Activated CD4-positive, alpha-beta T cell treated with anti-CD3 and anti-CD28 coated beads for 36 hours (primary cell): ENCODE measurements at regions of chr14 and their contacts with region 1.

Region 1: DNA sequence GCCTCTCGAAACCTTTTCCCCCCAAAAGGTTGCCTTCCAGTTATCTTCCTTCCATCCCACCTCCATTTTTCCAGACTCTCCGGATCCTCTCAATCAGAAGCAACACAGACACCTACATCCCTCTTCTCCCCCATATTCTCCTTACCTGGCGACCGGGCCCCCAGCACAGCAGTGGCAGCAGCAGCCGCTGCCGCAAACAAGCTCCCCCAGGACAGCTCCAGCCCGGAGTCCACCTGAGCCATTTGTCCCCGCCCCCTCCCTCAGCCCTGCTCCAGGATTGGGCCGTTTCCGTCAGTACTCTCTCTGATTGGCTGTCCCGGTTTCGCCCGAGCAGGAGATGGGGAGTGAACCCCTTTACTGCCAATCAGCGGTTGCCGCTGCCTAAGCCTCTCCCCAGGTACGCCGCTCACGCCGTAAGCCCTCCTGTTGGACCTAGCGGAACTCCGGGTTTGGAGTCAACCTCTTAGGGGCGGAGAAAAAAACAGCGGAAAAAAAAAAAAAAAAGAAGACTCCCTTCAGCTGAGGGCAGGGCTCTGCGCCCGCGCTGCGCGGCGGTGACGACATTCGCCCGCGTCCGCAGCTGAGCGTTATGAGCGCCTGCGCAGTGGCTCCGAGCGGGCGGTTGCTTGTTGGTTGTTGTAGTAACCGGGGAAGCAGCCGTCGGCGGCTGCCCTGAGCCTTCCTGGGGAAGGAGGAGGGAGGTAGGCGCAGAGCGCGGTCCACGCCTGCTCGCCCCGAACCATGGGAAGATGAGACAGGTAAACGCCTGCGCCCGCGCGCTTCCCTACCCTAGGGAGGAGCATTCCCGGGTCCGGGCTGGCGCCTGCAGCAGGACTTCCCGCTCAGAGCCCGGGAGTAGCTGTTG is at the starts of genes ERG28 and TTLL5:
- DNase-seq: peak; percentile 97
- ATAC-seq: peak; percentile 99
- H3K4me3 Mint-ChIP-seq: peak within 1 kb of the TSS; percentile 96
- H3K27ac Mint-ChIP-seq: peak within 1 kb of the TSS; percentile 99
- H3K4me1 Mint-ChIP-seq: peaks cover 17% of the 10 kb centered on the region
- H3K27me3 Mint-ChIP-seq: no peaks in the 10 kb centered on the region
- total RNA-seq, gene ERG28: 19.1 to 23.7 TPM
- total RNA-seq, gene TTLL5: 27.3 to 38.6 TPM

Region 2: DNA sequence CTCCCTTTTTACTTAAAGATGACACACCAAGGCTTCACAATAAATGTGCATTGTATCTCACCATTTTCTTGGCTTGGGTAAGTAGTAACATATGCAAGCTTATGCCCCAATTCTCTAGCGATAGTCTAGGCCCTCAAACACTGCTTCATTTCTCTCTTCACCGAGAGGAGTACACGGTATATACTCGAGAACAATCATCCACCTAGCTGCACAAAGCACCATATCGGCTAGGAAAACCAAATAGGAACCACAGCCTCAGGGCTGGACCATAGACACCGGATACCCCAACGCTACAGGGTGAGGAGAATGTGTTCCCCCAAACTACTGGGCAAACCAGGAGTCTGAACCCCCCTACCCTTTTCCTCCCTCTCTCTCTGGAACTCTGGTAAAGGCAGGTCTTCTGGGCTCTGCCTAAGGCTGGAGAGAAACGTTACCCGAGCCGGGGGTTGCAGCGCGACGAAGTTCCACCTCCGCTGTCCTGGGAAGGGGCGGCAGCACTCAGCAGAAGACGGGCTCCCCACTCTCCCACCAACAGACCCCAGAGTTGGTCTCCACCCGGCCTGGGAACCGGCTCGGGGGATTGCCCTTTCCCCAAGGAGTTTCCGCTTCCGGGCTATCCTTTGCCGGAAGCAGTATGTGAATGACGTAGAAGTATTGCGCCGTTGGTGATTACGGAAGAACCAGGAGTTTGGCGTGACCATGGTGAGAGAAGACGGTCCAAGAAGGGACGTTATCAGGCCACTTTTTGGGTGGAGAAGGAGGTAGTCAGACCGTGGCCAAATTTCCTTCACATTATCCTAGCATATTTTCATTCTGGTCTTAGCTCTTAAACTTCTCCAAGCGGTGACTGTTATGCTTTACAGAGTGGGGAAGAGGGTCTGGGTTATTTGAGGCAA is 948.1 kb before region 1 on chr14 and contains the starts of genes AREL1 and FCF1:
- CTCF ChIA-PET with region 1: no interaction called
- POLR2A ChIA-PET with region 1: no interaction called
- intact Hi-C with region 1: loop called in 1 of 2 experiments (anchors 1 kb)
- DNase-seq: peak; percentile 88
- ATAC-seq: peak; percentile 98
- H3K4me3 Mint-ChIP-seq: peak within 1 kb of the TSS; percentile 98
- H3K27ac Mint-ChIP-seq: peak within 1 kb of the TSS; percentile 98
- H3K4me1 Mint-ChIP-seq: peaks cover 50% of the 10 kb centered on the region
- H3K27me3 Mint-ChIP-seq: no peaks in the 10 kb centered on the region
- total RNA-seq, gene AREL1: 31.3 to 35.6 TPM
- total RNA-seq, gene FCF1: 87.7 to 112 TPM

Region 3: GRCh38 chr14:75126679-75127473 is 534.0 kb before region 1 on chr14 and contains the start of gene NEK9:
- CTCF ChIA-PET with region 1: no interaction called
- POLR2A ChIA-PET with region 1: no interaction called
- intact Hi-C with region 1: loop called in 1 of 2 experiments (anchors 2 kb)
- DNase-seq: peak; percentile 94
- ATAC-seq: peak; percentile 90
- H3K4me3 Mint-ChIP-seq: peak within 1 kb of the TSS; percentile 97
- H3K27ac Mint-ChIP-seq: peak within 1 kb of the TSS; percentile 98
- H3K4me1 Mint-ChIP-seq: peaks cover 41% of the 10 kb centered on the region
- H3K27me3 Mint-ChIP-seq: no peaks in the 10 kb centered on the region
- total RNA-seq, gene NEK9: 45.2 to 58.7 TPM

Region 4: DNA sequence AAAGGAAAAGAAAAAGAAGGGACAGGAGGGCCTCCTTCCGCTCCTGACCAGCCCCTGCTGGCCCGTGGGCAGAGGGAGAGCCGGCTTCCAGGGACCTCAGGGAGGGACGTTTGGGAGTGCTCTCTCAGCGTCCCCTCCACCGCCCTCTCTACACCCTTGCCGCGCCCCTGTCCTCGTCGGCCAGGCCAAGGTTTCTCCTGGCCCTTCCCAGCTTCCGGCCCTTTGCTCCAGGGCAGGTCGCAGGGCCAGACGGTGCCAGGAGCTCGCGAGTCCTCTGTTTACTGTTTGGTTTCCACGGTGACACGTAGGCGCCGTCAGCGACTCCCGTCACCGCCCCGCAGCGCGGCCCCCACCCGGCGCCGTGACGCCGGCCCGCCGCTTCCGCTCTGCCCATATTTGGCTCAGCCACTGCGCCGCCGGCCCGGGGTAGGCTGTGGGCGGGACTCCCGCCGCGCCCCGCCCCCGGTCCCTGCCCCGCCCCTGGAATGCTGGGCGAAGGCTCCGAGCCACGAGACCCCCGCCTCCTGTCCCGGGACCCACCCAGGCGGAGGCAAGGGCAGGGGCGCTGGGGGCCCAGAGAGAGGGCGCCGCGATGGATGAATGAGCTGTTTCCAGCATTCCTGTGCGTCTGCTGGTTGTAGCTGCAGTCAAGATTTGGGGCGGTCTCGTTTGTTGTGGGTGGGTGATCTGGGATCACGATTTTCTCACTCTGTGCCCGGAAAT is 366.8 kb before region 1 on chr14:
- CTCF ChIA-PET with region 1: interaction called, 3 read pairs
- POLR2A ChIA-PET with region 1: no interaction called
- intact Hi-C with region 1: loop called in 1 of 2 experiments (anchors 1 kb)
- DNase-seq: peak; percentile 97
- ATAC-seq: peak; percentile 96
- H3K4me3 Mint-ChIP-seq: peak overlapping the region; percentile 73
- H3K27ac Mint-ChIP-seq: peak overlapping the region; percentile 85
- H3K4me1 Mint-ChIP-seq: peaks cover 22% of the 10 kb centered on the region
- H3K27me3 Mint-ChIP-seq: peaks cover 3% of the 10 kb centered on the region

Region 5: GRCh38 chr14:75577729-75578101 is 83.1 kb before region 1 on chr14:
- CTCF ChIA-PET with region 1: interaction called, 104 read pairs
- POLR2A ChIA-PET with region 1: interaction called, 6 read pairs
- intact Hi-C with region 1: loop called in 1 of 2 experiments (anchors 1 kb)
- DNase-seq: peak; percentile 89
- ATAC-seq: peak; percentile 90
- H3K4me3 Mint-ChIP-seq: peak overlapping the region; percentile 74
- H3K27ac Mint-ChIP-seq: peak overlapping the region; percentile 74
- H3K4me1 Mint-ChIP-seq: peaks cover 22% of the 10 kb centered on the region
- H3K27me3 Mint-ChIP-seq: no peaks in the 10 kb centered on the region

Region 6: DNA sequence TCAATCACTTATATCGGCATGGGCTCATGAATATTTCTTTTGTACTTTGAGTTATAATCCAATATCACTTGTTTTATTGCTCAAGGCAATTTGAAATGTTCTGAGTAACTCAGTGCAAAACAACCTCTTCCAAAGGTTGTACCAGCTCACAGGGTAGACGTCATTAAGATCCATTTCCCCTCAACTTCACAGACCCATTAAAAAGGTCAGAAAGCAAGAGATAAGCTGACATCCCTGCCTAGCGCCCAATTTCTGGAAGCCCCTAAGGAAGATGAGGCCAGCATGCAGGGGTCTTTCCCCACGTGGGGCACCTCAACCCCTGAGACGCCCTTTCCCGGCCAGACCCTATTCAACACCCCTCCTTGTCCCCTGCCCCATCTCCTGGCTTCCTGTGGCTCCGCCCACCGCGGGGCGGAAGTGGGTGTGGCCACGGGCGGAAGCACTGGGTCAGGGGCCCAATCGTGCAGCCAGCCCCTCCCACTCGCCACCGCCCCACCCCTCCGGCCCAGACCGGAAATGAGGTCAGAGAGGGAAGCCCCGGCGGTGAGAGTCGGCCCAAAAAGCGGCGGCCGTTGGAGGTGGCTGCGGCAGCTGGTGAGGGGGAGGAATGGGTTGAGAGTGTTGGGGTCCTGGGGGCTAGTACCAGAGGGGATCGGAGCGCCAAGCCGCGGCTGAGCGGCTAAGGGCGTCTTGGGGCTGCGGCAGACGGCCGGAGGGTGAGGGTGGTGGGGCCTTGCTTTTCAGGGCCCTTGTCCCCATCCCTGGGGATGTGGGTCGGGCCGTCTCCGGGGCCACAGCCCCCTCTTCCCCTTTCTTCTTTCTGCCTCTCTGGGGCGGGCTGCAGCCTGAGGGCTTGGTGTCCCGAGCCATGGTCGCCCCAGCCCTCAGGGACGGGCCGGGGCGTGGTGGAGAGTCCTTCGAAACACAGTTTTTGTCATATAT is 490.8 kb after region 1 on chr14 and contains the start of gene GPATCH2L:
- CTCF ChIA-PET with region 1: no interaction called
- POLR2A ChIA-PET with region 1: no interaction called
- intact Hi-C with region 1: loop called in 1 of 2 experiments (anchors 2 kb)
- DNase-seq: peak; percentile 98
- ATAC-seq: peak; percentile 92
- H3K4me3 Mint-ChIP-seq: peak within 1 kb of the TSS; percentile 92
- H3K27ac Mint-ChIP-seq: peak within 1 kb of the TSS; percentile 95
- H3K4me1 Mint-ChIP-seq: peaks cover 46% of the 10 kb centered on the region
- H3K27me3 Mint-ChIP-seq: no peaks in the 10 kb centered on the region
- total RNA-seq, gene GPATCH2L: 43.0 to 47.2 TPM